ENCODE measurements at regions of chr2 and their contacts with region 1.

Region 1: DNA sequence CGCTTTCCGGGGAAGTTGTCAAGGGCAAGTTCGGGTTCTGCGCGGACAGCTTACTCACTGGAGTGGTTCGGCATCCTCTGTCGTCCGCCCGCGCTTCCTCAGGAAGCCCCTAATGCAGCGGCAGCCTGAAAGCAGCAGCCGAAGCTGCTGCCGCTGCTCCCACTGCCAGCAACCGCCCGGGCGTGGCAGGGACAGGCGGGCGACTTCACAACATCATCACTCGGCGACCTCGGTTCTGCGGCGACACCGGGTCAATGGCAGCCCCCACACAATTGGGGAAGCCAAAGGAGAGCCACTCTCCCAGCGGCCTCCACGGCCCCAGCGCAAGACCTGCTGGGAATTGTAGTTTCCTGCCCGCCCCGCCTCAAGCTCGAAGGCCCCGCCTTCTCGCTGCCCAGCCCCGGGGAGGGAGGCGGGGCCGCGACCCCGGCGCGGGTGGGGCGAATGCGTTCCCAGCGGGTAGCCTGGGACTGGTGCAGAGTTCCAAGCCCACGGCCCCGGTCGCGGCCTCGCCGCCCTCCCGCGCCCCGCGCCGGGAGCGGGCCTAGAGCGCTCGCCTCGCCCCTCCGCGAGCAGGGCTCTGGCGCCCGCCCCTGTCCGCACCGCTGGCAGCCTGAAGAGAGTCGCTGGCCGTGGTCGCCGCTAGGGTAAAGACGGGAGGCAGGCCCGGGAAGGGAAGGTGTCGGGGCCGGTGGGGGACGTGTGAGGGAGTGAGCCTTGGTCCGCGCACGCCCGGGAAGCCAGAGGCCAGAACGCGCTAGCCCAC is at the starts of genes STRADB and TRAK2:
- DNase-seq: peak; percentile 85 to 97
- H3K4me3 ChIP-seq: peak within 1 kb of the TSS; percentile 88 to 90
- H3K27ac ChIP-seq: peak within 1 kb of the TSS; percentile 80 to 89
- H3K4me1 ChIP-seq: peaks cover 10 to 28% of the 10 kb centered on the region in 2 donors
- H3K27me3 ChIP-seq: no peaks in the 10 kb centered on the region
- CTCF ChIP-seq: peak; percentile 18 to 31 (median 20)
- total RNA-seq, gene STRADB: 22.8 TPM
- total RNA-seq, gene TRAK2: 40.3 TPM

Region 2: GRCh38 chr2:201257956-201258665 is 193.4 kb before region 1 on chr2:
- intact Hi-C with region 1: loop called (anchors 5 kb)
- DNase-seq: peak; percentile 49 to 86
- H3K4me3 ChIP-seq: peak overlapping the region; percentile 71 to 72
- H3K27ac ChIP-seq: peak overlapping the region; percentile 84 to 87
- H3K4me1 ChIP-seq: peaks cover 2 to 15% of the 10 kb centered on the region in 2 donors
- H3K27me3 ChIP-seq: no peaks in the 10 kb centered on the region
- CTCF ChIP-seq: no peak

Region 3: GRCh38 chr2:201406077-201406662 is 45.3 kb before region 1 on chr2:
- intact Hi-C with region 1: loop called (anchors 1 kb)
- DNase-seq: no peak
- H3K4me3 ChIP-seq: peak overlapping the region; percentile 4 to 20
- H3K27ac ChIP-seq: peak overlapping the region; percentile 65 to 80
- H3K4me1 ChIP-seq: peaks cover 6 to 51% of the 10 kb centered on the region in 2 donors
- H3K27me3 ChIP-seq: no peaks in the 10 kb centered on the region
- CTCF ChIP-seq: no peak